MCF 10A (cell line): ENCODE measurements at regions of chr10 and their contacts with region 1.

Region 1: DNA sequence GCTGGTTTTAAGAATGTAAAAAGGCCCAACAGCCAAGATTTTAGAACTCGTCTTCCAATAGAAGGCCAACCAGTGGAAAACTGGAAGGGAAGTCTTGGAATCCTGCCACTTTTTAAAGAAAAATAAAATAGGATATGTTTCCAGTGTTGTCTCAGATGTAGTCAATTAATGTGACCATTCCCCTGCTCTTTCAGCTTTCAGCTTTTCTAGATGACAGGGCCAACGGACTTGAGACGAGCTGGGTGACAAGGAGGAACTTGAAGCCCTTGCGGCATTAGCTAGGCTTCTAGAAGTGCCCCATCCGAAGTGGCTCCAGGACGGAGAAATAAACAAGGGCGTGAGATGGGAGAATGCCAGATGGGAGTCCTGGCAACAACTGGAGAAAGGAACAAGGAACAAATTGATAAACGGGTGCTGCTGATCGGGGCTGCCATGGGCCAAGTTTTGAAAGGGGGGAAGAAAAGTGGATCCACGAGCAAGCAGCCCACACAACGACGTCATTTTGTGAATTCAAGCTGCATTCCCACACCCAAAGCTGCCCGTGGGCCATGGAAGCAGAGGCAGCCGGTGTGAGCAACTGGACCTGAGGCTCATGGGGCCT is 42.3 kb downstream of the CTBP2 start:
- DNase-seq: no peak
- H3K4me3 Mint-ChIP-seq: no peak overlapping the region
- H3K27ac Mint-ChIP-seq: no peak overlapping the region
- H3K4me1 Mint-ChIP-seq: peaks cover 32% of the 10 kb centered on the region
- H3K27me3 Mint-ChIP-seq: no peaks in the 10 kb centered on the region
- CTCF ChIP-seq: no peak

Region 2: GRCh38 chr10:124961248-124961570 is 156.9 kb before region 1 on chr10:
- CTCF ChIA-PET with region 1: no interaction called
- POLR2A ChIA-PET with region 1: no interaction called
- intact Hi-C with region 1: no loop called
- DNase-seq: no peak
- H3K4me3 Mint-ChIP-seq: no peak overlapping the region
- H3K27ac Mint-ChIP-seq: no peak overlapping the region
- H3K4me1 Mint-ChIP-seq: no peaks in the 10 kb centered on the region
- H3K27me3 Mint-ChIP-seq: no peaks in the 10 kb centered on the region
- CTCF ChIP-seq: no peak

Region 3: GRCh38 chr10:125089469-125089868 is 28.6 kb before region 1 on chr10:
- CTCF ChIA-PET with region 1: interaction called, 5 read pairs
- POLR2A ChIA-PET with region 1: interaction called, 11 read pairs
- intact Hi-C with region 1: loop called (anchors 1 kb)
- DNase-seq: no peak
- H3K4me3 Mint-ChIP-seq: no peak overlapping the region
- H3K27ac Mint-ChIP-seq: peak overlapping the region; percentile 31
- H3K4me1 Mint-ChIP-seq: peaks cover 47% of the 10 kb centered on the region
- H3K27me3 Mint-ChIP-seq: no peaks in the 10 kb centered on the region
- CTCF ChIP-seq: no peak

Region 4: DNA sequence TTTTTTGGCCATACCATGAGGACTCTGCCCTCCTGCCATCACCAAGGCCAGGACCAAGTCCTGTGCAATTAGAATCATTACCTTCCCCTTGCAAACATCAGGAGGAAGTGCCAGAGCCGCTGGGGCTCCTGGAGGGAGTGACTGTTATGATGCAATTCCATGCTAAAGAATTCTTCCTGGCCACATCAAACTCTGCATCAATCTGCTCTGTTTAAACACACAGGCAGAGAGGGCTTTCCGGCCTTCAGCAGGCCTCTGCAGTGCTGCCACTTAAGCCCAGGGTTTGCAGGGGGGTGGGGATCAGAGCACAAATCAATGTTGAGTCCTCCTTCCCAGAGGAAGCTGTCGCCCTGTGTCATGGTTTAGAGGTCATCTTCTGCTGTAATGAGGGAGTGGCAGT is 15.9 kb before region 1 on chr10:
- CTCF ChIA-PET with region 1: interaction called, 6 read pairs
- POLR2A ChIA-PET with region 1: interaction called, 11 read pairs
- intact Hi-C with region 1: no loop called
- DNase-seq: peak; percentile 62
- H3K4me3 Mint-ChIP-seq: no peak overlapping the region
- H3K27ac Mint-ChIP-seq: no peak overlapping the region
- H3K4me1 Mint-ChIP-seq: peaks cover 29% of the 10 kb centered on the region
- H3K27me3 Mint-ChIP-seq: no peaks in the 10 kb centered on the region
- CTCF ChIP-seq: no peak

Region 5: DNA sequence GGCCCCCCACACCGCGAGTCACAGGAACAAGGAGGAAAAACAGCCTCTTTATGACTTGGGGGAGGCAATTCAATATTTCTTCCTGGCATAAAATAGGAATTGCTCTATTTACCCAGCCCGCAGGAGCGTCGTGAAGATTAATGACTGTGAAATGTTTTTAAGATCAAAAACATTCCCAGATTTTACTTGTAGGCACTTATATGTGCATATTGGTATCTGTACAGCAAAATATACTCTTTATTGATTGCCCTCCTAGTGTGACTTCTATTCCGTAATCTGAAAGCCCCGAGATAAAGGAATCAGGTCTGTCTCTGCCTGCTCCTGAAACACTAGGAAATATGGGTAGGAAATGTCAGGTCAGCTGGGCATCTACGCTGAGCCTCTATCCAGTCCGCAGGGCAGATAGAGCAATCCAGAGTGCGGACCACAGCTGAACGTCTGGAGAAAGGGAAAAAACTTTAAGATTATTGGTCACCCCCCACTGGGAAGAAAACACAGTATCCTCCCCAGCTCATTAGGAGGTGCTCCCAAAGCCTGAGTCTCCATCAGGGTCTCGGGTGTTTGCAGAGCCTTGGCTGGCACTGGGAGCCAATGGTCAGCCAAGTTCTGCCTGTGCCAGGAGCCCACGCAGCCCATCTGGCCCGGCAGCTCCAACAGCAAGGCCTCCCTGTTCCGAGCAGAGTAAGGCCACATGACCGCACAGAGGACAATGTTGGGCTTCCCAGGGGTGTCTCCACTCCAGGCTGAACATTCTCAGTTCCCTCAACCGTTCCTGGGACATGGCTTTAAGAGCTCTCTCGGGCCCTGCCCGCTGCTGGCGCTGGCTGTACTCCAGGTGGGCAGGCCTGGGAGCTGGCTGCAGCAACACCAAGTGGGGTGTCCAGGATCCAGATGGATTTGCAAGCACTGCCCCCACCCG is 34.6 kb after region 1 on chr10:
- CTCF ChIA-PET with region 1: interaction called, 8 read pairs
- POLR2A ChIA-PET with region 1: interaction called, 165 read pairs
- intact Hi-C with region 1: loop called (anchors 5 kb)
- DNase-seq: peak; percentile 54
- H3K4me3 Mint-ChIP-seq: peak overlapping the region; percentile 82
- H3K27ac Mint-ChIP-seq: peak overlapping the region; percentile 92
- H3K4me1 Mint-ChIP-seq: peaks cover 76% of the 10 kb centered on the region
- H3K27me3 Mint-ChIP-seq: no peaks in the 10 kb centered on the region
- CTCF ChIP-seq: no peak